K562 (cell line): ENCODE measurements at regions of chr19 and their contacts with region 1.

Region 1: DNA sequence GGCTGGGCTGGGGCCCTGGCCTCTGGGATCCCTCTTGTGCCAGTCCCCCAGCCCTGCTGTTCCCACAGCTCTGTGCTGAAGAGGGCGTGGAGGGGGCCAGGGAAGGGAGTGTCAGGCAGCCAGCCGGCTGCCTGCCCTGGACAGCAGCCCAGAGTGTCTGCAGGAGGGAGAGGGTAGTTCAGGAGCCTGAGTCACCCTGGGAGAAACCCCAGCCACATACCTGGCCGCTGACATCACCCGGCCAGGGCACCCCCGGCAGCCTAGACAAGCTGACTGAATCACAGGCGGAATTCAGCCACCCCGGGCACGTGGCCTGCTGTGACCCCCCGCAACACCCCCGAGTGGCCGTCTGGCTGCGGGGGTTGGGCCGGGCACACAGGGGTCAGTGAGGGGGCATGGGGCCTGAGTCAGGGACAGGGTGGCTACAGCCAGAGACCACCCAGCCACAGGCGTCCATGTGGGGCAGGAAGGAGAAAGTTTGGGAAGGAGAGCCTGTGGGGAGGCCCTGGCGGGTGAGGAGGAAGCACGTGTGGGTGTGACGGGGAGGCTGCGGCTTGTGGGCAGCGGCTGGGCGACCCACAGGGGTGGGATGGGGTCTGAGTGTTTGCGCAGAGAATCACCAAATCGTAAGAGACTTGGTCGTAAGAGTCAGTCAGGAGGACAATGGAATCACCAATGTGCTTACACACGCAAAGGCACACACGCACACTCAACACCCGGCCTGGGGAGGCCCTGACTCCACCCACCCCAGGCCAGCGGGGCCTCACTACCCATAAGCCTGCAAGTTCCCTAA is 11.9 kb upstream of the FOSB start:
- DNase-seq: peak; percentile 84 to 93 (median 88)
- ATAC-seq: peak; percentile 94
- H3K4me3 ChIP-seq: no peak overlapping the region
- H3K27ac ChIP-seq: peak overlapping the region; percentile 86
- H3K4me1 ChIP-seq: peaks cover 13 to 19% of the 10 kb centered on the region in 2 experiments
- H3K27me3 ChIP-seq: no peaks in the 10 kb centered on the region
- CTCF ChIP-seq: no peak
- EP300 ChIP-seq: no peak
- POLR2A ChIP-seq: no peak; the same call in none of the 2 replicates
- RAD21 ChIP-seq: no peak

Region 2: GRCh38 chr19:45340232-45340898 is 115.5 kb before region 1 on chr19 and contains the start of gene KLC3:
- CTCF ChIA-PET with region 1: no interaction called
- POLR2A ChIA-PET with region 1: no interaction called
- in situ Hi-C with region 1: no loop called
- intact Hi-C with region 1: no loop called
- DNase-seq: peak; percentile 71 to 96 (median 92)
- ATAC-seq: peak; percentile 84
- H3K4me3 ChIP-seq: peak within 1 kb of the TSS; percentile 42
- H3K27ac ChIP-seq: no peak within 1 kb of the TSS
- H3K4me1 ChIP-seq: peaks cover 7 to 37% of the 10 kb centered on the region in 2 experiments; a peak in 4 of 5 replicates
- H3K27me3 ChIP-seq: peaks cover 8 to 13% of the 10 kb centered on the region in 2 experiments; a peak in 3 of 5 replicates
- CTCF ChIP-seq: no peak
- EP300 ChIP-seq: no peak
- POLR2A ChIP-seq: no peak
- RAD21 ChIP-seq: no peak
- polyA plus RNA-seq, gene KLC3: 0.03 TPM in 1 of 2 experiments, not detected in the other

Region 3: GRCh38 chr19:45469132-45469944 is 13.4 kb after region 1 on chr19:
- CTCF ChIA-PET with region 1: no interaction called
- POLR2A ChIA-PET with region 1: interaction called, 36 read pairs
- in situ Hi-C with region 1: no loop called
- intact Hi-C with region 1: no loop called
- DNase-seq: peak; percentile 94 to 97 (median 97)
- ATAC-seq: peak; percentile 90
- H3K4me3 ChIP-seq: peak overlapping the region; percentile 88
- H3K27ac ChIP-seq: peak overlapping the region; percentile 88
- H3K4me1 ChIP-seq: peaks cover 21 to 53% of the 10 kb centered on the region in 2 experiments; a peak in 4 of 5 replicates
- H3K27me3 ChIP-seq: no peaks in the 10 kb centered on the region
- CTCF ChIP-seq: no peak
- EP300 ChIP-seq: no peak
- POLR2A ChIP-seq: peak; percentile 86
- RAD21 ChIP-seq: no peak